ENCODE measurements at regions of chr1 and their contacts with region 1.

Region 1: GRCh38 chr1:23634842-23635651 is 56.6 kb upstream of the RPL11 start:
- DNase-seq: peak; percentile 12
- H3K4me3 ChIP-seq: peak overlapping the region; percentile 60
- CTCF ChIP-seq: peak; percentile 83

Region 2: GRCh38 chr1:23456226-23456625 is 178.8 kb before region 1 on chr1:
- CTCF ChIA-PET with region 1: no interaction called
- POLR2A ChIA-PET with region 1: no interaction called
- DNase-seq: no peak
- H3K4me3 ChIP-seq: no peak overlapping the region
- CTCF ChIP-seq: no peak

Region 3: GRCh38 chr1:23530747-23531561 is 104.1 kb before region 1 on chr1 and contains the start of gene E2F2:
- CTCF ChIA-PET with region 1: interaction called, 1,485 read pairs
- POLR2A ChIA-PET with region 1: no interaction called
- DNase-seq: no peak
- H3K4me3 ChIP-seq: peak within 1 kb of the TSS; percentile 65
- CTCF ChIP-seq: peak; percentile 34

Region 4: GRCh38 chr1:23577056-23578004 is 57.7 kb before region 1 on chr1:
- CTCF ChIA-PET with region 1: interaction called, 1,485 read pairs
- POLR2A ChIA-PET with region 1: no interaction called
- DNase-seq: peak; percentile 74
- H3K4me3 ChIP-seq: peak overlapping the region; percentile 43
- CTCF ChIP-seq: no peak

Region 5: DNA sequence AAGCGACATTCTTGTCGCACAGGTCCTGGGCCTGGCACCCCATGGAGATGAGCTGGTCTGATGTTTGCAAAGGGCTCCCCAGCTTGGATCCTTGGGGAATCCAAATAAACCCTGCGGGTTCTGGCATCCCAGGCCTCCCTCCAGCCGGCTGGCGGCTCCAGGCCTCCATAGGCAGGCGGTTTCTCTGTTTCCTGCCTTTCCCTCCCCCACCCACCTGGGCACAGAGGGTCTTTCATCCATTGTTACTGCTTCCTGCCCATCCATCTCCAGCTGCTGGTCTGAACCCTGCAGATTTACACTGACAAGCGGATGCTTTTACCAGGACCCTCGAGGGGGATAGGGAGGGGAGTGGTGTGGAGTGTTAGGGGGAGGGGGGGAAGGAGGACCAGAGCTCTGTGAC is 36.6 kb before region 1 on chr1:
- CTCF ChIA-PET with region 1: interaction called, 21 read pairs
- POLR2A ChIA-PET with region 1: no interaction called
- DNase-seq: no peak
- H3K4me3 ChIP-seq: no peak overlapping the region
- CTCF ChIP-seq: no peak

Region 6: GRCh38 chr1:23651069-23651808 is 16.2 kb after region 1 on chr1:
- CTCF ChIA-PET with region 1: interaction called, 111 read pairs
- POLR2A ChIA-PET with region 1: no interaction called
- DNase-seq: no peak
- H3K4me3 ChIP-seq: no peak overlapping the region
- CTCF ChIP-seq: no peak

Region 7: DNA sequence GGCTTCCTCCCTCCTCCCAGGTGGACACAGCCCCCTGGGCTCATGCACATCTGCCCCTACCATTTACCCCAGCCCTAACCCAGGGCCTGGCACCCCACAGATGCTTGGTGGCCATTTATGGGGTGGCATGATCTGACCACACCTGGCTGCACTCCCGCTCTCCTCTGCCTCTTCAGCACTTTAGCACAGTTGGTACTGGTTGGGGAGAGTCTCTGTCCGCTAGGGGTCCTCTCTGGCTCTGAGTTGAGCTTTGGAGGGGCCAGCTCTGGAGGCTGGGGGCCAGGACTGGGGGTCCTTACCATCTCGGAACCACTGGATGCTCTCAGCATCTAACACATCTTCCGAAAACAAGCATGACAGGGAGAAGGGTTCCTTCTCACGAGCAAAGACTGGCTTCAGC is 459.5 kb after region 1 on chr1:
- CTCF ChIA-PET with region 1: no interaction called
- POLR2A ChIA-PET with region 1: no interaction called
- DNase-seq: no peak
- H3K4me3 ChIP-seq: no peak overlapping the region
- CTCF ChIP-seq: no peak

Measured in AG04449 (cell line).